Activated CD4-positive, alpha-beta T cell treated with anti-CD3 and anti-CD28 coated beads, Interleukin-2, amount 10 ng/mL, durations not matched to agents 24 days and 14 days (primary cell): ENCODE measurements at regions of chr17 and their contacts with region 1.

Region 1: GRCh38 chr17:30796016-30796415 is 28.5 kb downstream of the CRLF3 start:
- DNase-seq: no peak
- H3K4me3 Mint-ChIP-seq: no peak overlapping the region
- H3K27ac Mint-ChIP-seq: peak overlapping the region; percentile 81
- H3K4me1 Mint-ChIP-seq: peaks cover 15% of the 10 kb centered on the region
- H3K27me3 Mint-ChIP-seq: no peaks in the 10 kb centered on the region

Region 2: DNA sequence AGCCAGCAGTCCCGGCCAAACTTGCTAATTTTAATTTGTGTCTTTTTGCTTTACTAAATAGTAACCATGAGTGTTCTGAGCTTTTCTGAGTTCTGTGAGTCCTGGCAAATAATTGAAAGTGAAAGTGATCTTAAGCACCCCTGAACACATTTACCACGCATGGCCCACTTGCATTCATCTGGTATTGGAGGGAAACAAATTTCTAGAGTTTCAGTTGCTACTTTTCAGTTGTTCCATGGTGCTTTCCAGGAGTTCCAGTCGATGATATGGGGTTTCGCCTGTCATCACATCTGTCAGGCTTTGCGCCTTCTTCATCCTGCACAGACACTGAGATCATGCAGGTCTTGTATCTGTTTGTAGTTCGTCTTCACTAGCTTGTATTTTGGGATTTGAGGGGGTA is 15.7 kb before region 1 on chr17:
- intact Hi-C with region 1: loop called (anchors 1 kb)
- DNase-seq: peak; percentile 71
- H3K4me3 Mint-ChIP-seq: peak overlapping the region; percentile 57
- H3K27ac Mint-ChIP-seq: peak overlapping the region; percentile 96
- H3K4me1 Mint-ChIP-seq: peaks cover 10% of the 10 kb centered on the region
- H3K27me3 Mint-ChIP-seq: no peaks in the 10 kb centered on the region

Region 3: GRCh38 chr17:30808785-30809286 is 12.8 kb after region 1 on chr17:
- intact Hi-C with region 1: loop called (anchors 1 kb)
- DNase-seq: peak; percentile 87
- H3K4me3 Mint-ChIP-seq: peak overlapping the region; percentile 87
- H3K27ac Mint-ChIP-seq: peak overlapping the region; percentile 87
- H3K4me1 Mint-ChIP-seq: peaks cover 54% of the 10 kb centered on the region
- H3K27me3 Mint-ChIP-seq: no peaks in the 10 kb centered on the region